MCF 10A (cell line): ENCODE measurements at regions of chr10 and their contacts with region 1.

Region 1: DNA sequence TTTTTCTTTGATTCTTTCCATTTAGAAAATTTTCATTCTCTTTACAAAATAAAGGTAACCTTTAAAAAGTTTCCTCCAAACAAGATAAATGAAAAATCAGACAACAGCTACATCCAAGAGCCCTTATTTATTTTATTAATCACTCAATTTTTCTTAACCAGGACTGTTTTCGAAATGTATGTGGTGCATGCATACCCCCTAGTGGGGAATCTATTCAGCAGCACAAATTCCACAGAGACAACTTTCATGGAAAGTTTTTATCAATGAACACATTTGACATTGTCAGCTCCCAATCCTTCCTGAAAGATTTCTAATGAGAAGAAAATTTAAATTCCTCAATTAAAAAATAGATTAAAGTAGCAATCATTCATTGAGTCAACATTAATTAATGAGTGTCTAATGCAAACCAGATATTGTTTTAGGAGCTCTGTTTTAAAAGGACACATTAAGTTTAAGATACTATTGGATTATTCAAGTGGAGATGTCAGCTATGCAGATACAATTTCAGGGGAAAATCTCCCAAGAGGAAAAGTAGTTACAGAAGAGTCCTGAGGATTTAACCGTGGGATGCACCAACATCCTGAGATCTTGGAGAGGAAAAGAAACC is 5.2 kb upstream of the HTR7 start:
- DNase-seq: peak; percentile 61
- H3K4me3 Mint-ChIP-seq: no peak overlapping the region
- H3K27ac Mint-ChIP-seq: no peak overlapping the region
- H3K4me1 Mint-ChIP-seq: peaks cover 9% of the 10 kb centered on the region
- H3K27me3 Mint-ChIP-seq: no peaks in the 10 kb centered on the region
- CTCF ChIP-seq: peak; percentile 93

Region 2: GRCh38 chr10:89426230-89426868 is 1436.7 kb before region 1 on chr10:
- CTCF ChIA-PET with region 1: no interaction called
- POLR2A ChIA-PET with region 1: no interaction called
- intact Hi-C with region 1: loop called (anchors 5 kb)
- DNase-seq: peak; percentile 70
- H3K4me3 Mint-ChIP-seq: no peak overlapping the region
- H3K27ac Mint-ChIP-seq: no peak overlapping the region
- H3K4me1 Mint-ChIP-seq: peaks cover 26% of the 10 kb centered on the region
- H3K27me3 Mint-ChIP-seq: no peaks in the 10 kb centered on the region
- CTCF ChIP-seq: peak; percentile 74

Region 3: GRCh38 chr10:90148116-90148855 is 714.7 kb before region 1 on chr10:
- CTCF ChIA-PET with region 1: no interaction called
- POLR2A ChIA-PET with region 1: no interaction called
- intact Hi-C with region 1: loop called (anchors 5 kb)
- DNase-seq: peak; percentile 60
- H3K4me3 Mint-ChIP-seq: no peak overlapping the region
- H3K27ac Mint-ChIP-seq: peak overlapping the region; percentile 44
- H3K4me1 Mint-ChIP-seq: peaks cover 14% of the 10 kb centered on the region
- H3K27me3 Mint-ChIP-seq: no peaks in the 10 kb centered on the region
- CTCF ChIP-seq: peak; percentile 57

Region 4: GRCh38 chr10:90592638-90593302 is 270.2 kb before region 1 on chr10:
- CTCF ChIA-PET with region 1: interaction called, 4 read pairs
- POLR2A ChIA-PET with region 1: interaction called, 4 read pairs
- intact Hi-C with region 1: loop called (anchors 10 kb)
- DNase-seq: peak; percentile 76
- H3K4me3 Mint-ChIP-seq: no peak overlapping the region
- H3K27ac Mint-ChIP-seq: no peak overlapping the region
- H3K4me1 Mint-ChIP-seq: no peaks in the 10 kb centered on the region
- H3K27me3 Mint-ChIP-seq: no peaks in the 10 kb centered on the region
- CTCF ChIP-seq: peak; percentile 62

Region 5: GRCh38 chr10:90751107-90751997 is 111.7 kb before region 1 on chr10:
- CTCF ChIA-PET with region 1: interaction called, 149 read pairs
- POLR2A ChIA-PET with region 1: interaction called, 54 read pairs
- intact Hi-C with region 1: loop called (anchors 1 kb)
- DNase-seq: peak; percentile 71
- H3K4me3 Mint-ChIP-seq: no peak overlapping the region
- H3K27ac Mint-ChIP-seq: no peak overlapping the region
- H3K4me1 Mint-ChIP-seq: peaks cover 16% of the 10 kb centered on the region
- H3K27me3 Mint-ChIP-seq: no peaks in the 10 kb centered on the region
- CTCF ChIP-seq: peak; percentile 91